PC-9 (cell line): ENCODE measurements at regions of chr6 and their contacts with region 1.

Region 1: DNA sequence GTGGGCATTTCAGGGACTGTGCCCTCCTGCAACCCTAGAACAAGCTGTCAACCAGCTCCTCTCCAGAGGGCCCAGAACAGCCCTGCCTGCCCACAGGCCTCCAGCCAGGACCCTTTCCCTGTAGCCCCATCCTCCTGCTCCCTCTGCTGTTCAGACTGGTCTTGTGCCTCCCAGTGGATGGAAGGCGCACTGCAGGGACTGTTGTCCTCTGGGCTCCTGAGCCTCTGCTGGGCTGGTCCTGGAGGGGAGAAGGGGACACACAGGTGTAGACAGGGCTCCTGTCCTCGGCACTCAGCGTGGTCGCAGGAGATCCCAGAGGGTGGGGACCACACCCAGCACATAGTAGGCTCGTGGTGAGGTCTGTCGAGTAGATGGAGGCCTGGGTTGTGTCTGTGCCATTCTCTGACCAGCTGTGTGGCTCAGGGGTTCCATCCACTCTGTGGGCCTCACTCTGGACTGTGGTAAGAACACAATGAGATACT is 11.5 kb downstream of the ITPR3 start:
- DNase-seq: no peak
- H3K4me3 ChIP-seq: peak overlapping the region; percentile 54; the same call in 1 of the 2 replicates
- H3K27ac ChIP-seq: peak overlapping the region; percentile 34
- H3K4me1 ChIP-seq: peaks cover 29% of the 10 kb centered on the region
- H3K27me3 ChIP-seq: no peaks in the 10 kb centered on the region
- CTCF ChIP-seq: peak; percentile 79; the same call in 1 of the 2 replicates

Region 2: DNA sequence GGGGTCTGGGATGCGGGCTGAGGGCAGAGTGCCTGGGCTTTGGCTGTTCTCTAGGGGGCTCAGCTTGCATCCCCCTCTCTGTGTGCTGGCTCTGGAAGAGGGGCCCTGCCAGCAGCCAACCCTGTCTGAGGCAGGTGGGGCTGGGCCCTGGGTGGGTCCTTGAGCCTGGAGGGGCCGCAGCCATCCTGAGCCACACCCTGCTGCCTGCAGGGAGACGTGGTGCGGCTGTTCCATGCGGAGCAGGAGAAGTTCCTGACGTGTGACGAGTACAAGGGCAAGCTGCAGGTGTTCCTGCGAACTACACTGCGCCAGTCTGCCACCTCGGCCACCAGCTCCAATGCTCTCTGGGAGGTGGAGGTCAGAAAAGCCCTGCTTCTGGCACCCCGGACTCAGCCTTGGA is 29.7 kb after region 1 on chr6:
- CTCF ChIA-PET with region 1: interaction called, 12 read pairs
- POLR2A ChIA-PET with region 1: interaction called, 5 read pairs
- intact Hi-C with region 1: no loop called
- DNase-seq: no peak
- H3K4me3 ChIP-seq: no peak overlapping the region
- H3K27ac ChIP-seq: no peak overlapping the region
- H3K4me1 ChIP-seq: no peaks in the 10 kb centered on the region
- H3K27me3 ChIP-seq: no peaks in the 10 kb centered on the region
- CTCF ChIP-seq: no peak